Tibial artery (tissue), 4 donors: ENCODE measurements at regions of chr13 and their contacts with region 1.

Region 1: DNA sequence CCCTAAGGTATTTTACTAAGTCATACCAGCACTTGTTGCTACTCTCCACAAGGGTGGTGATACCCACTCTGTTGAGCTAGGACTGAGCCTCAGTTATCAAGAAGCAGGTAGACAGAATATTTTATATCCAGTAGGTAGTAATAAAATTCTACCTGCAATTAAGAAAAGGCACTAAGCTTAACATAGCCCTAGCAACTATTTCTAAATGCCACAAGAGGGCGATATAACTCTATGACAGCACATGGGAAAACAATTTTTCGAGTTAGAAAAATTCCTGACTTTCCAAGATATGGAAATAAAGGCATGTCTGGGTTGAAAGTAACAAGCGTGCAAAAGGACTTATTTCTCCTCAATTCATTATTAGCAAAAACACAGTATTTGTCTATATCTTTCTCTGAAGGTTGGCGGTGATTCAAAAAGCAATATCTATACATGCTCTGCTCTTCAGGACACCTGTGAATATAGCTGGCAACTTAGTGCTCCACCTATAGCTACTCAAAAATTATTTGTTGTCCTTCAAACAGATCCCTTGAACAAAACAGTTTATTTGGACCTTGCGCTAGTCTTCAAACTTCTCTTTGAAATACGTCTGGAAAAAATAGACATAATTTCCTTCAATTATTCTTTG is 14.7 kb downstream of the CCDC169 start:
- DNase-seq: no peak
- H3K4me3 ChIP-seq: no peak overlapping the region
- H3K27ac ChIP-seq: no peak overlapping the region
- H3K4me1 ChIP-seq: no peaks in the 10 kb centered on the region
- H3K27me3 ChIP-seq: no peaks in the 10 kb centered on the region
- CTCF ChIP-seq: peak; percentile 78 to 81

Region 2: DNA sequence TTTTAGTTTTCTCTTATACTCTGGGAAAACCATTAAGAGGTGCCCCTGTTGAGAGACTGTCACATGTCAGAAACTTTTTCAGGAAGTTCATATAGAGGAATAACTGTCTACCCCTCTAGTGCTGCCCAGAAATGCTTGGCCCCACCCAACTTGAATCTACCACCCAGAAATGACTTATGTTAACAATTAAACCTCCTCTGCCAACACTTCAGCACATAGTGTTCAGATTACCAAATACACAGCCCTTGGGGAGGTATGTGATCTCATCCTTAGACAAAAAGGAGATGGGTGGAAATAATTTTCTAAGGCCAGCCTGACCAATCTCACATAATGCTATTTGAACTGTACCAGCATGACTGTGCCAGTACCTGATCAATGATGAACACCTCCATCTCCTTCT is 21.0 kb before region 1 on chr13:
- intact Hi-C with region 1: no loop called
- DNase-seq: peak in 1 of 2 donors; percentile 41
- H3K4me3 ChIP-seq: no peak overlapping the region
- H3K27ac ChIP-seq: no peak overlapping the region
- H3K4me1 ChIP-seq: no peaks in the 10 kb centered on the region
- H3K27me3 ChIP-seq: no peaks in the 10 kb centered on the region
- CTCF ChIP-seq: no peak

Region 3: GRCh38 chr13:36382030-36382429 is 99.1 kb after region 1 on chr13:
- intact Hi-C with region 1: no loop called
- DNase-seq: no peak
- H3K4me3 ChIP-seq: no peak overlapping the region
- H3K27ac ChIP-seq: no peak overlapping the region
- H3K4me1 ChIP-seq: no peaks in the 10 kb centered on the region
- H3K27me3 ChIP-seq: no peaks in the 10 kb centered on the region
- CTCF ChIP-seq: no peak

Region 4: DNA sequence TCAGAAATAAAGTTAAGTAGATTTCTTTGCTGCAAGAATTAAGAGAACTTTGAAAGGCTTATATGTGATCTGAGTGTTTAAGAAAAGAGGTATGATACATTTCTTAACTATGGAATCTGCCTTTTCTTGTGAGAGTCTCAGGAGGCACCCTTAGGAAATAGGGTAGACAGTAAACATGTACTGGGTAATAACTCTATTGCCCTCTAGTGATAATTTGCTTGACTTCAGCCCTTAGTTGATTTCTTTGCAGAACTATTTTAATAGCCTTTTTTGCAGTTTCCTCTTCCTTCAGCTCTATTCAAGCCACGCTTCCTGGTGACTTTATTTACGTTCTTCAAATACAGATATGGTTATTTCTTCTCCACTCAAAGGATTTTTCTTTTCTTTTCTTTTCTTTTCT is 112.3 kb after region 1 on chr13:
- intact Hi-C with region 1: loop called (anchors 10 kb)
- DNase-seq: no peak
- H3K4me3 ChIP-seq: no peak overlapping the region
- H3K27ac ChIP-seq: no peak overlapping the region
- H3K4me1 ChIP-seq: no peaks in the 10 kb centered on the region
- H3K27me3 ChIP-seq: no peaks in the 10 kb centered on the region
- CTCF ChIP-seq: peak; percentile 54 to 63

Region 5: DNA sequence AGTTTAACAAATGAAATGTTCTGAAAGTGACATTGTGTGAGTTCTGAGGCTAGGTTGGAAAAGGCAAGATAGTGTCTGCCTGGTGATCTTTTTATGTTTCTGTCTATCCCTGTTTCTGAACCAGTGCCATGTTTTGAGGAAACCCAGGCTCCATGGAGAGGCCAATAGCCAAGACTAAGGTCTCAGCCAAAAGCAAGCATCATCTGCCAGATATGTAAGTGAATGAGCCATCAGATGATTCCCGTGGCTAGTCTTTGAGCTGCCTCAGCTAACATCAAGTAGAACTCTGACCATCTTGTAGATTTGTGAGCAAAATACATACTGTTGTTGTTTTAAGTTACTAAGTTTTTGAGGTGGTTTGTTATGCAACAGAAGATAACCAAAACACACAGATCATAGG is 129.8 kb after region 1 on chr13:
- intact Hi-C with region 1: no loop called
- DNase-seq: no peak
- H3K4me3 ChIP-seq: no peak overlapping the region
- H3K27ac ChIP-seq: no peak overlapping the region
- H3K4me1 ChIP-seq: no peaks in the 10 kb centered on the region
- H3K27me3 ChIP-seq: no peaks in the 10 kb centered on the region
- CTCF ChIP-seq: no peak